ENCODE measurements at regions of chr11 and their contacts with region 1.

Region 1: DNA sequence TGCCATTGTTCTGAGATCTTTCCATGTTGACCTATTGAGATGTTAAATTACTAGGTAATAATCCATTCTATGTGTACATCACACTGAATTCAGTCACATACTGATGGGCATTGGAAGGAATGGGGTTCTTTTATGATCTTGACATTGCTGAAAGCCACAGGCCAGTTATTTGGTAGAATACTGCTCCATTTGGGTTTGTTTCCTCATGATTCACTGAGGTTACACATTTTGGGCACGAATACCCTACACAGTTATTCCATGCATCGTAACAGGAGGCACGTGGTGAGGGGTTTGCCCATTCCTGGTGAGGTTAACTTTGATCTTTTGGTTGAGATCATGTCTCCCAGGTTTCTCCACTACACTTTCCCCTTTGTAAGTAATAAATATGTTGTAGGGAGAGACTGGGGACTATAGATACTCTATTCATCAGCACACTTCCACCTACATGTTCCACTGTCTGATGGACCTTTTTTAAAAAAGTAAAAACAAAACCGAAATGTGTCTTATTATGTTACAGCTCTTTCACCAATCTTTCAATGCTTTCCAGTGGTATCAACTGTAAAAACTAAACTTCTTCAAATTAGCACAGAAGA is 12.0 kb upstream of the FOLR1 start:
- DNase-seq: no peak
- ATAC-seq: no peak
- H3K4me3 ChIP-seq: no peak overlapping the region
- H3K27ac ChIP-seq: no peak overlapping the region
- H3K4me1 ChIP-seq: peaks cover 5% of the 10 kb centered on the region
- H3K27me3 ChIP-seq: no peaks in the 10 kb centered on the region; a peak in 1 of 5 replicates
- CTCF ChIP-seq: no peak
- EP300 ChIP-seq: no peak
- POLR2A ChIP-seq: no peak
- RAD21 ChIP-seq: no peak

Region 2: GRCh38 chr11:72141066-72141465 is 38.8 kb before region 1 on chr11:
- CTCF ChIA-PET with region 1: no interaction called
- POLR2A ChIA-PET with region 1: no interaction called
- in situ Hi-C with region 1: no loop called
- intact Hi-C with region 1: loop called (anchors 2 kb)
- DNase-seq: no peak
- ATAC-seq: no peak
- H3K4me3 ChIP-seq: no peak overlapping the region
- H3K27ac ChIP-seq: no peak overlapping the region
- H3K4me1 ChIP-seq: no peaks in the 10 kb centered on the region
- H3K27me3 ChIP-seq: peaks cover 0 to 1% of the 10 kb centered on the region in 2 experiments; a peak in 2 of 5 replicates
- CTCF ChIP-seq: no peak
- EP300 ChIP-seq: no peak
- POLR2A ChIP-seq: no peak
- RAD21 ChIP-seq: no peak

Region 3: GRCh38 chr11:72191961-72192381 is 12.1 kb after region 1 on chr11 and contains the start of gene FOLR1:
- CTCF ChIA-PET with region 1: no interaction called
- POLR2A ChIA-PET with region 1: no interaction called
- in situ Hi-C with region 1: no loop called
- intact Hi-C with region 1: no loop called
- DNase-seq: no peak
- ATAC-seq: no peak
- H3K4me3 ChIP-seq: no peak within 1 kb of the TSS
- H3K27ac ChIP-seq: no peak within 1 kb of the TSS
- H3K4me1 ChIP-seq: 0 out of 2 replicates have a peak, but pooled peaks cover 7% of the 10 kb centered on the region
- H3K27me3 ChIP-seq: 0 out of 5 replicates have a peak, but pooled peaks cover 0 to 6% of the 10 kb centered on the region in 2 experiments
- CTCF ChIP-seq: no peak
- EP300 ChIP-seq: no peak
- POLR2A ChIP-seq: no peak
- RAD21 ChIP-seq: no peak
- total RNA-seq, gene FOLR1: not detected in 2 replicates

Region 4: GRCh38 chr11:72209101-72209500 is 29.2 kb after region 1 on chr11:
- CTCF ChIA-PET with region 1: no interaction called
- POLR2A ChIA-PET with region 1: no interaction called
- in situ Hi-C with region 1: no loop called
- intact Hi-C with region 1: no loop called
- DNase-seq: no peak
- ATAC-seq: no peak
- H3K4me3 ChIP-seq: no peak overlapping the region
- H3K27ac ChIP-seq: no peak overlapping the region
- H3K4me1 ChIP-seq: no peaks in the 10 kb centered on the region
- H3K27me3 ChIP-seq: no peaks in the 10 kb centered on the region
- CTCF ChIP-seq: no peak
- EP300 ChIP-seq: no peak
- POLR2A ChIP-seq: no peak
- RAD21 ChIP-seq: no peak

Region 5: GRCh38 chr11:72625691-72626413 is 446.0 kb after region 1 on chr11:
- CTCF ChIA-PET with region 1: no interaction called
- POLR2A ChIA-PET with region 1: no interaction called
- in situ Hi-C with region 1: no loop called
- intact Hi-C with region 1: no loop called
- DNase-seq: peak; percentile 53
- ATAC-seq: peak; percentile 92
- H3K4me3 ChIP-seq: peak overlapping the region in 1 of 3 experiments; percentile 54; a peak in 3 of 6 replicates
- H3K27ac ChIP-seq: no peak overlapping the region
- H3K4me1 ChIP-seq: peaks cover 26% of the 10 kb centered on the region
- H3K27me3 ChIP-seq: peaks cover 7 to 58% of the 10 kb centered on the region in 2 experiments
- CTCF ChIP-seq: 0 out of 2 replicates have a peak, but pooled peaks have one; percentile 6
- EP300 ChIP-seq: no peak
- POLR2A ChIP-seq: no peak
- RAD21 ChIP-seq: no peak